A673 (cell line): ENCODE measurements at regions of chr3 and their contacts with region 1.

Region 1: GRCh38 chr3:181176601-181177000 is 187.1 kb upstream of the DNAJC19 start:
- DNase-seq: peak; percentile 75
- H3K4me3 ChIP-seq: no peak overlapping the region
- H3K27ac ChIP-seq: no peak overlapping the region
- H3K4me1 ChIP-seq: no peaks in the 10 kb centered on the region
- H3K27me3 ChIP-seq: peaks cover 51% of the 10 kb centered on the region
- CTCF ChIP-seq: peak; percentile 71

Region 2: DNA sequence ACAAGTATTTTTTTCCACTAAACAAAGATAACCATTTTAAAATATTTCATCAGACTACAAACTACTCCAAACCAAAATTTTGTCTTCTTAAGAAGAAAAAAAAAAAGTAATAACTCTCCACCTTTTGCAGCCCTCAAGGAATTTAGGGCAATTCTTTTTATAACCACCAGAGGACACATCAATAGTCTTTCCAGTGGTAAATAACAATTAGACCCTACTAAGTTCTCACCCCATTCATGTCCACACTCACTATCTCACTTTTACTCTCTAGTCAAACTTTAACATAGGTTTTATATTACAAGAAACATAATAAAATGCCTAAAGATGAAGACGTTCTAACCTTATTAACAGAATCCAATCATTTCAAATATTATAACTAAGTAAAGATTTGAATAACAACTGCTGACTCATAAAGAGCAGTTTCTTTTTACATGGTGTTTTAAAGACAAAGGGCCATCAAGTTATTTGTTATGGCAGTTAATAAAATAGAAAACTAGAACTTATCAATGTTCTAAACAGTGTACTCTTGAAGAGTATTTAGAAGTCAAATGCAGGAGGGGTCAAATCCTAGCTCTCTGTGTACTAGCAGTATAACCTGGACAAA is 530.3 kb before region 1 on chr3:
- CTCF ChIA-PET with region 1: no interaction called
- POLR2A ChIA-PET with region 1: no interaction called
- intact Hi-C with region 1: loop called (anchors 10 kb)
- DNase-seq: peak; percentile 9
- H3K4me3 ChIP-seq: no peak overlapping the region
- H3K27ac ChIP-seq: no peak overlapping the region
- H3K4me1 ChIP-seq: no peaks in the 10 kb centered on the region
- H3K27me3 ChIP-seq: peaks cover 30% of the 10 kb centered on the region
- CTCF ChIP-seq: peak; percentile 42; the same call in 1 of the 2 replicates

Region 3: GRCh38 chr3:180802837-180803236 is 373.8 kb before region 1 on chr3:
- CTCF ChIA-PET with region 1: no interaction called
- POLR2A ChIA-PET with region 1: no interaction called
- intact Hi-C with region 1: loop called (anchors 2 kb)
- DNase-seq: peak; percentile 39
- H3K4me3 ChIP-seq: no peak overlapping the region
- H3K27ac ChIP-seq: no peak overlapping the region
- H3K4me1 ChIP-seq: no peaks in the 10 kb centered on the region
- H3K27me3 ChIP-seq: peaks cover 6% of the 10 kb centered on the region
- CTCF ChIP-seq: peak; percentile 64

Region 4: DNA sequence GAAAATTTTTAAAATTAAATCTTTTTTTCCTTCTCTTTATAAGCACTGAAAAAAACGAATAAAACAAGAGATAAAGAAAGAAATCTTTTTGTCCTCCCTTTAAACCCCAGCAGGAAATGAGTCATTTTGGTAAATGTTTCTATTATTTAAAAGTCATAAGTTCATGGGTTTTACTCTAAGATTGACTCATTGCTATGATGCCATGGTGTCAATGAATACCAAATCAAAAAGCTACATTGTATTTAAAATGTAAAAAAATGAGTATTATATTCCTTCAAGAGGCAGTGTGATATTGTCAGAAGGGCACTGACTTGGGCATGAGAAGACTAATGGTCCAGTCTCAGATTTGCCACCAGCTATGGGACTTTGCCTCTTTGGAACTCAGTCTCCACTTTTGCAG is 116.4 kb after region 1 on chr3:
- CTCF ChIA-PET with region 1: no interaction called
- POLR2A ChIA-PET with region 1: no interaction called
- intact Hi-C with region 1: no loop called
- DNase-seq: peak; percentile 75
- H3K4me3 ChIP-seq: no peak overlapping the region
- H3K27ac ChIP-seq: no peak overlapping the region
- H3K4me1 ChIP-seq: peaks cover 10% of the 10 kb centered on the region
- H3K27me3 ChIP-seq: peaks cover 2% of the 10 kb centered on the region
- CTCF ChIP-seq: no peak

Region 5: GRCh38 chr3:182019657-182020335 is 843.2 kb after region 1 on chr3:
- CTCF ChIA-PET with region 1: no interaction called
- POLR2A ChIA-PET with region 1: no interaction called
- intact Hi-C with region 1: no loop called
- DNase-seq: no peak
- H3K4me3 ChIP-seq: no peak overlapping the region
- H3K27ac ChIP-seq: no peak overlapping the region
- H3K4me1 ChIP-seq: peaks cover 9% of the 10 kb centered on the region
- H3K27me3 ChIP-seq: no peaks in the 10 kb centered on the region
- CTCF ChIP-seq: no peak